ENCODE measurements at regions of chr17 and their contacts with region 1.

Region 1: DNA sequence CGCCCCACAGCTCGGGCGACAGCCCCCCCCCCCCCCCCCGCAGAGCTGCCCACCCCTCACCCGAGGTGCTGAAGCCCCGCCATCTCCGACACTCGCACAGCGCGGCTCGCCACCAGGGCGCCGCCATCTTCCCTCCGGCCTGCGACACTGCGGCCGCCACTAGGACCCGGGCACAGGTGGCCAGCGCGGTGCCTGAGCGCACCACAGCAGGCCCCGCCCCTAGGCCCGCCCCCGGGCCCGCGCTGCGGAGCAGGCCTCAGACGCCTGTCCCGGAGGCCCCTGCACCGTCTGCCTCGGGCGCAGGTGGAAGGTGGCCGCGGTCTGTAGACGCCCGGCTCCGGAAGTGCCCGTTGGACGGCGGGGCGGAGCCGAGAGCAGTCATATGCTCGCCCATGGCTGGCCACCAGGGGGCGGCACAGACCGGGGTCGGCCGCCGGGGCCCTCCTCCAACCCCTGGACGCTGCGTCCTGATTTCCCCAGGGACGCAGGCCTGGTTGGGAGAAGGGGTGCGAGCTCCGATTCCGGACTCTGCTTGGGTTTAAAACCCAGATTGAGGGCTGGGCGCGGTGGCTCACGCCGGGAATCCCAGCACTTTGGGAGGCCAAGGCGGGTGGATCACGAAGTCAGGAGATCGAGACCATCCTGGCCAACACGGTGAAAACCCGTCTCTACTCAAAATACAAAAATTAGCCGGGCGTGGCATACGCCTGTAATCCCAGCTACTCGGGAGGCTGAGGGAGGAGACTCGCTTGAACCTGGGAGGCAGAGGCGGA is at the start of gene MRPL38:
- DNase-seq: peak; percentile 96
- ATAC-seq: peak; percentile 98
- H3K4me3 Mint-ChIP-seq: peak within 1 kb of the TSS; percentile 87
- H3K27ac Mint-ChIP-seq: peak within 1 kb of the TSS; percentile 92
- H3K4me1 Mint-ChIP-seq: peaks cover 15% of the 10 kb centered on the region
- H3K27me3 Mint-ChIP-seq: no peaks in the 10 kb centered on the region
- CTCF ChIP-seq: peak; percentile 99
- total RNA-seq, gene MRPL38: 117 to 126 TPM

Region 2: DNA sequence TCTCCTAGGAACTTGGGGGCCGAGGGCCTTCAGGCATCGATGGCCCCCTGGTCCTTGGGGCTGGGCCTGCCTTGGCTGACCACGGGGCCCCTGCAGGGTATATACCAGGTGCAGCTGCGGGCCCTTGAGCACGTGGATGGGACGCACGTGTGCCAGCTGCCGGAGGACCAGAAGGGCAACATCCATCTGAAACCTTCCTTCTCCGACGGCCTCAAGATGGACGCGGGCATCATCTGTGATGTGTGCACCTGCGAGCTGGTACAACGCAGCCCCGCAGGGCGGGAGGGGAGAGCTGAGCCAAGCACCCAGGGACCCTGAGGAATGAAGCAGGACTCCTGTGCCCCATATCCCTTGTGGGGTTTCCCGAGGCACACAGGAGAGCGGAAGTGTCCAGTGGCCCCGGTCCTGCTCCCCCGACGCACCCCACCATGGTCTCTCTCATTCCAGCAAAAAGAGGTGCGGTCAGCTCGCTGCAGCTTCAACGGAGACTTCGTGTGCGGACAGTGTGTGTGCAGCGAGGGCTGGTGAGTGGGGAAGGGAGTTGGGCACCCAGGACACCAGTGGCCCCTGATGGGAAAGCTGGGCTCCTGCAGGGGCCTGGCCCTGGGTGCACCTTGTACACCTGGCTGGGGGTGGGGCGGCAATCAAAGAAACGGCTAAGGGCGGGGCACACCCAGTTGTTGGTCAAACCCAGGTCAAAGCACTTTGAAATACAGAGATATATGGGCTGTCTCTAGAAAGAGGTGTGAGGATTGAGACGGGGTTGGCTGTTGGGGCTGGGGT is 173.0 kb before region 1 on chr17:
- CTCF ChIA-PET with region 1: no interaction called
- POLR2A ChIA-PET with region 1: no interaction called
- intact Hi-C with region 1: no loop called
- DNase-seq: no peak
- ATAC-seq: no peak
- H3K4me3 Mint-ChIP-seq: no peak overlapping the region
- H3K27ac Mint-ChIP-seq: no peak overlapping the region
- H3K4me1 Mint-ChIP-seq: peaks cover 2% of the 10 kb centered on the region
- H3K27me3 Mint-ChIP-seq: no peaks in the 10 kb centered on the region
- CTCF ChIP-seq: no peak

Region 3: GRCh38 chr17:75784473-75785015 is 120.4 kb before region 1 on chr17 and contains the start of gene UNK:
- CTCF ChIA-PET with region 1: no interaction called
- POLR2A ChIA-PET with region 1: no interaction called
- intact Hi-C with region 1: no loop called
- DNase-seq: peak; percentile 98
- ATAC-seq: peak; percentile 71
- H3K4me3 Mint-ChIP-seq: peak within 1 kb of the TSS; percentile 93
- H3K27ac Mint-ChIP-seq: peak within 1 kb of the TSS; percentile 100
- H3K4me1 Mint-ChIP-seq: peaks cover 35% of the 10 kb centered on the region
- H3K27me3 Mint-ChIP-seq: peaks cover 2% of the 10 kb centered on the region
- CTCF ChIP-seq: no peak
- total RNA-seq, gene UNK: 26.4 to 26.6 TPM

Region 4: DNA sequence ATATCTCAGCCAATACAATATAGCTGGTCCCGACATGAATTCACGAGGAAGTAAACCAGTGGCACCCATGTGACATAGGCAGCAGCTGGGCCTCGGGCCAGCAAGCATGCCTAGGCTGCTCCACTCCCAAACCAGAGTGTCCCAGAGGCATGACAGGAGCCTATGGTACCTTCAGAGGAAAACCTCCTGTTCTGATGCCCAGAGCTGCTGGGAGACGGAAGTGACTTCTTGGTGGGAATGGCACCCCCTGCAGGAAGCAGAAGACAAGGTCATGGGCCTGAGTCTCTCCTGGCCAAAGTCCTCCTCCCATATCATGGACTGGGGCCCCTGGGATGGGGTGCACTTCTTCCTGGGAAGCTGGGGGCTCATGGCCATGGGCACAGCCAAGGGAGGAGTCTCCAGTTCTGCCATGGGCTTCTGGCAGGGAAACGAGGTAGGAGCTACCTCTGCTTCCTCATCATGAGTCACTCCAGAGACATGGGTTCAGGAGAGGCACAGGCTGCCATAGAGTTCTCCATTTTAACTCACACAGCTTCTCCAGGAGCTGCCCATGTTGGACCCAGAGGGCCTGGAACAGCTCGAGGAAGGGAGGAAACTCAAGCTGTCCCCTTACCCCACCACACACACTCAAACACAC is 22.5 kb after region 1 on chr17:
- CTCF ChIA-PET with region 1: interaction called, 12 read pairs
- POLR2A ChIA-PET with region 1: interaction called, 6 read pairs
- intact Hi-C with region 1: no loop called
- DNase-seq: peak; percentile 28
- ATAC-seq: peak; percentile 51
- H3K4me3 Mint-ChIP-seq: no peak overlapping the region
- H3K27ac Mint-ChIP-seq: no peak overlapping the region
- H3K4me1 Mint-ChIP-seq: no peaks in the 10 kb centered on the region
- H3K27me3 Mint-ChIP-seq: no peaks in the 10 kb centered on the region
- CTCF ChIP-seq: no peak

Region 5: GRCh38 chr17:75942473-75942872 is 37.5 kb after region 1 on chr17:
- CTCF ChIA-PET with region 1: no interaction called
- POLR2A ChIA-PET with region 1: no interaction called
- intact Hi-C with region 1: no loop called
- DNase-seq: no peak
- ATAC-seq: no peak
- H3K4me3 Mint-ChIP-seq: no peak overlapping the region
- H3K27ac Mint-ChIP-seq: no peak overlapping the region
- H3K4me1 Mint-ChIP-seq: peaks cover 12% of the 10 kb centered on the region
- H3K27me3 Mint-ChIP-seq: no peaks in the 10 kb centered on the region
- CTCF ChIP-seq: no peak

Region 6: DNA sequence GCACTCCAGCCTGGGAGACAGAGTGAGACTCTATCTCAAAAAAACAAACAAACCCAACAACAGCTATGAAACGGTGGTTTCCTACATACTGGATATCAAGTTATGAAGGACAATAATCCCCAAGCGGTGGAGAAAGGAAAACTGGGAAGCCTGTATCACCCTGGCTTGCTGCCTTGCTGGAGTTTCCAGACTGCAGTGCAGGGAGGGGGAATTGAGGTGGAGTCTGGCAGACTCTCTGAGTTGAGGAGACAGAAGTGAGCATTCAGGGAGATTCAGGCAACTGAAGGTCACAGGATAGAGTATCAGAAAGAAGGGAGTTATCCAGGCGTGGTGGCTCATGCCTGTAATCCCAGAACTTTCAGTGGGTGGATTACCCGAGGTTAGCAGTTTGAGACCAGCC is 391.3 kb after region 1 on chr17:
- CTCF ChIA-PET with region 1: no interaction called
- POLR2A ChIA-PET with region 1: no interaction called
- intact Hi-C with region 1: no loop called
- DNase-seq: no peak
- ATAC-seq: no peak
- H3K4me3 Mint-ChIP-seq: no peak overlapping the region
- H3K27ac Mint-ChIP-seq: no peak overlapping the region
- H3K4me1 Mint-ChIP-seq: no peaks in the 10 kb centered on the region
- H3K27me3 Mint-ChIP-seq: no peaks in the 10 kb centered on the region
- CTCF ChIP-seq: no peak

Measured in activated CD8-positive, alpha-beta T cell treated with anti-CD3 and anti-CD28 coated beads for 36 hours (primary cell).